Body of pancreas (tissue), 4 donors: ENCODE measurements at regions of chr18 and their contacts with region 1.

Region 1: DNA sequence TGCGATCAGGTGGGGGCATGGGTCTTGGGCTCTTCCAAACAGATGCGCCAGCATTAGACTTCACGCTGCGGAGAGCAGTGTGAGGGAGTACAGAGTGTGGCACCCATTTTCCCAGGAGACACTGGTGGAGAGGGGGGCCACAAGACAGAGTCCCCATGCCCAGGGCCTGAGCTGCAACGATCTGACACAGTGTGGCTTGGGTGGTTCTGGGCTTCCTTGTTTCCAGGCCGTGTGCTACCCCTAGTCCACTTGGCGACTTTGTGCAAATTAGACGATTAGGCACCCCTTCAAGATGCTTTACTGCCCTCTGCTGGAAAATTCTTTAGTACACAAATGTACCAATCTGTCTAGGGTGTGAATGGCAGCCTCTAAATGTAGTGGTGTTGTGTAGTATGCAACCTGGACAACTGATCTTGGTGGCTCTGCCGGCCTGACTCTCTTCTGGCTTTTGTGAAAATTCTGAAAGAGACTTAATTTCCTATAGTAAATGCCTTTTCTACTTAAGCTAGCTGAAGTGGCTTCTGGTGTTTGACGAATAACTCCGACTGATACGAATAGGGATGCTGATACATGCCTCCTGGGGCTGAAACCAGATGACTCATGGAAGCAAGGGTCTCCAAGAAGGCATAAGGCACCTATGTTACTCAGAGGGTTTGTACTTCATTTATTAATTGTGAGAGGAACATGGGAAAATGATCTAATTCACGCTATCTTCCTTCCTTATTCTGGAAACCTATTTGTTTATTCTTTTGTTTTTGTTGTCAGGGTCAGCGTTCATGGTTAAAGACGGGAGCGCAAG is 92.3 kb upstream of the SMAD2 start:
- DNase-seq: peak in 3 of 4 donors; percentile 33 to 57 (median 34)
- ATAC-seq: peak; percentile 70
- H3K4me3 ChIP-seq: no peak overlapping the region
- H3K27ac ChIP-seq: no peak overlapping the region
- H3K4me1 ChIP-seq: no peaks in the 10 kb centered on the region
- H3K27me3 ChIP-seq: no peaks in the 10 kb centered on the region
- CTCF ChIP-seq: peak in 6 of 7 experiments; percentile 53 to 77 (median 69)
- POLR2A ChIP-seq: no peak

Region 2: DNA sequence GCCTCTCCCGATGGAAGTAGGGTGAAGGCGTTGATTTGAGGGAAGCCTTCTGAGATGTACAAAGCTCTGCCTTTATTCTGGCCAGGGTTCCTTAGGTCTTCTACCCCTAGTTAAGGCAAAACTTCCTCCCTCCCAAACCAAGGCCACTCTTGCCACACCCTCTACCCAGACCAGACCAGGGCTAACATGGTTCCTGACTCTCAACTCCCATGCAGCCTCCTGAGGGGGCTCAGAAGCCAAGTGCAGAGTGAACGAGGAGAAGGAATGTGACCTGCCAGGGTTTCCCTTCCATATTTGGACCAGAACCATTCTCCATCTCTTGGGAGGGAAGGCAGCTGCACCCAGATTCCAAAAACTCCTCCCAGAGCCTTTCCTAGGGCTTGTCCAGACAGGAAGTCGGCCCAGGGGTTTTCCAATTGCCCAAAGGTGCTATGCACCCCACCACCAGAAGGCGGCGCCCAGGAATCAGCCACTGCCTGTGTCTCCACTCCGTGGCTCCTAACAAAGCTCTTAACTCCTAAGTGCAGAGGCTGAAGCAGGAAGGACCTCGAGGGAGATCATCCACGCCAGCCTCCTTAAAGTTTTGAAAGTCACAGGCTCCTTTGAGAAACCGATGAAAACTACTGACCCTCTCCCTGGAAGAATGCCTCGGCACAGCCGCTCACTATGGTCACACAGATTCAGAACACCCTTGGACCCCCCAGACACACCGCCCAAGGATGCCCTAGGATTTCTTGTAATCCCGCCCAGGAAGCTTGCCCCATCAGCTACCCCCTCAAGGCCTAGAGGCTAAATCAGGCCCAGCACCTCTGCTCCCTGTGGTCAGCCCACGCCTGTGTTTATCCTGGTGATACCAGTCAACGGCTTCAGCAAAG is 250.1 kb before region 1 on chr18:
- intact Hi-C with region 1: loop called (anchors 10 kb)
- DNase-seq: peak; percentile 63 to 74 (median 68)
- ATAC-seq: peak; percentile 68
- H3K4me3 ChIP-seq: no peak overlapping the region
- H3K27ac ChIP-seq: no peak overlapping the region
- H3K4me1 ChIP-seq: no peaks in the 10 kb centered on the region
- H3K27me3 ChIP-seq: no peaks in the 10 kb centered on the region
- CTCF ChIP-seq: peak; percentile 63 to 81 (median 73)
- POLR2A ChIP-seq: no peak

Region 3: GRCh38 chr18:48230467-48231113 is 207.9 kb after region 1 on chr18:
- intact Hi-C with region 1: no loop called
- DNase-seq: peak in 3 of 4 donors; percentile 38 to 58 (median 48)
- ATAC-seq: peak; percentile 42
- H3K4me3 ChIP-seq: no peak overlapping the region
- H3K27ac ChIP-seq: no peak overlapping the region
- H3K4me1 ChIP-seq: peaks cover 10% of the 10 kb centered on the region
- H3K27me3 ChIP-seq: no peaks in the 10 kb centered on the region
- CTCF ChIP-seq: peak in 4 of 7 experiments; percentile 17 to 50 (median 34)
- POLR2A ChIP-seq: no peak

Region 4: DNA sequence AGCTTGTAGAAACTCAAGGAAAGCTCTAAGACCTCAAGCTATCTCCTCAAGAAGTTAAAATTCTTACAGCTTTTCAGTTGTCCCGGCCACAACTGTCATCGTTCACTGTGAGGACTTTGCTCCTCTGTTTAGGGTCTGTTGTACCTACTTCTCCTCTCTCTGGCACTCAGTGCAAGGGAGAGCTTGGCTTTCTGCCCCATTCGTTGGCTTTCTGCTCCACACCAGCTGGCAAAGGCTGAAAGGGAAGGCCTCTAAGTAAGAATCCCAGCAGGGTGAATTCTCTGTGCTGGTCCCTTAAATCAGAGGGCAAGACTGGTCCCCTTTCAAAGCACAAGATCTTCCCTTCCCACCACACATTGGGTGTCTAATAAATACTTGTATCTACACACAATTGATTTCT is 369.1 kb after region 1 on chr18:
- intact Hi-C with region 1: no loop called
- DNase-seq: peak in 1 of 4 donors; percentile 19
- ATAC-seq: no peak
- H3K4me3 ChIP-seq: no peak overlapping the region
- H3K27ac ChIP-seq: no peak overlapping the region
- H3K4me1 ChIP-seq: no peaks in the 10 kb centered on the region
- H3K27me3 ChIP-seq: no peaks in the 10 kb centered on the region
- CTCF ChIP-seq: no peak
- POLR2A ChIP-seq: no peak

Region 5: DNA sequence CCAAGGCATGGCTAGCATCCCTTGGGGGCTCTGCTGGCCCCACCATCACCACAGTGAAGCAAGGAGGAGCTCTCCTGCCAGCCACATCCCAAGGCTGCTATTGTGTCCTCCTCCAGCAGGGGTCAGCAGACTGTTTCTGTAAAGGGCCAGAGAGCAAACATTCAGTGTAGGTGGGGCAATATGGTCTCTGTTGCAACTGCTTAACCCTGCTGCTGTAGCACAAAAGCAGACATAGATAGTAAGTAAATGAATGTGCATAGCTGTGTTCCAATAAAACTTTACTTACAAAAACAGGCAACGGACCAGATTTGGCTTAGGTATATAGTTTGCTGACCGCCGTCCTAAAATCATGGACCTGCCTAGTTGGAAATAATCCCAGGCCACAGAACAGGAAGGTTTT is 422.8 kb after region 1 on chr18:
- intact Hi-C with region 1: loop called (anchors 5 kb)
- DNase-seq: peak; percentile 71 to 83 (median 80)
- ATAC-seq: peak; percentile 68
- H3K4me3 ChIP-seq: no peak overlapping the region
- H3K27ac ChIP-seq: no peak overlapping the region
- H3K4me1 ChIP-seq: peaks cover 6% of the 10 kb centered on the region
- H3K27me3 ChIP-seq: no peaks in the 10 kb centered on the region
- CTCF ChIP-seq: peak; percentile 58 to 81 (median 70)
- POLR2A ChIP-seq: no peak